CD8-positive, alpha-beta T cell (primary cell): ENCODE measurements at regions of chr7 and their contacts with region 1.

Region 1: GRCh38 chr7:8125680-8126444 is 136.1 kb downstream of the ICA1 start:
- DNase-seq: peak; percentile 67 to 96 (median 81)
- ATAC-seq: peak; percentile 91
- H3K4me3 ChIP-seq: peak overlapping the region in 1 of 2 experiments; percentile 3
- H3K4me3 Mint-ChIP-seq: peak overlapping the region; percentile 33
- H3K27ac ChIP-seq: peak overlapping the region; percentile 60 to 65
- H3K27ac Mint-ChIP-seq: peak overlapping the region; percentile 97
- H3K4me1 ChIP-seq: peaks cover 61% of the 10 kb centered on the region
- H3K4me1 Mint-ChIP-seq: peaks cover 85% of the 10 kb centered on the region
- H3K27me3 ChIP-seq: no peaks in the 10 kb centered on the region
- H3K27me3 Mint-ChIP-seq: no peaks in the 10 kb centered on the region
- CTCF ChIP-seq: no peak

Region 2: GRCh38 chr7:8084836-8085235 is 41.0 kb before region 1 on chr7:
- CTCF ChIA-PET with region 1: no interaction called
- POLR2A ChIA-PET with region 1: no interaction called
- intact Hi-C with region 1: loop called (anchors 2 to 5 kb)
- DNase-seq: no peak
- ATAC-seq: no peak
- H3K4me3 ChIP-seq: no peak overlapping the region
- H3K4me3 Mint-ChIP-seq: no peak overlapping the region
- H3K27ac ChIP-seq: no peak overlapping the region
- H3K27ac Mint-ChIP-seq: no peak overlapping the region
- H3K4me1 ChIP-seq: no peaks in the 10 kb centered on the region
- H3K4me1 Mint-ChIP-seq: peaks cover 3% of the 10 kb centered on the region
- H3K27me3 ChIP-seq: no peaks in the 10 kb centered on the region
- H3K27me3 Mint-ChIP-seq: no peaks in the 10 kb centered on the region
- CTCF ChIP-seq: no peak

Region 3: GRCh38 chr7:8092140-8092539 is 33.7 kb before region 1 on chr7:
- CTCF ChIA-PET with region 1: no interaction called
- POLR2A ChIA-PET with region 1: no interaction called
- intact Hi-C with region 1: loop called (anchors 2 to 5 kb)
- DNase-seq: no peak
- ATAC-seq: no peak
- H3K4me3 ChIP-seq: no peak overlapping the region
- H3K4me3 Mint-ChIP-seq: no peak overlapping the region
- H3K27ac ChIP-seq: no peak overlapping the region
- H3K27ac Mint-ChIP-seq: no peak overlapping the region
- H3K4me1 ChIP-seq: no peaks in the 10 kb centered on the region
- H3K4me1 Mint-ChIP-seq: peaks cover 3% of the 10 kb centered on the region
- H3K27me3 ChIP-seq: no peaks in the 10 kb centered on the region
- H3K27me3 Mint-ChIP-seq: no peaks in the 10 kb centered on the region
- CTCF ChIP-seq: no peak

Region 4: DNA sequence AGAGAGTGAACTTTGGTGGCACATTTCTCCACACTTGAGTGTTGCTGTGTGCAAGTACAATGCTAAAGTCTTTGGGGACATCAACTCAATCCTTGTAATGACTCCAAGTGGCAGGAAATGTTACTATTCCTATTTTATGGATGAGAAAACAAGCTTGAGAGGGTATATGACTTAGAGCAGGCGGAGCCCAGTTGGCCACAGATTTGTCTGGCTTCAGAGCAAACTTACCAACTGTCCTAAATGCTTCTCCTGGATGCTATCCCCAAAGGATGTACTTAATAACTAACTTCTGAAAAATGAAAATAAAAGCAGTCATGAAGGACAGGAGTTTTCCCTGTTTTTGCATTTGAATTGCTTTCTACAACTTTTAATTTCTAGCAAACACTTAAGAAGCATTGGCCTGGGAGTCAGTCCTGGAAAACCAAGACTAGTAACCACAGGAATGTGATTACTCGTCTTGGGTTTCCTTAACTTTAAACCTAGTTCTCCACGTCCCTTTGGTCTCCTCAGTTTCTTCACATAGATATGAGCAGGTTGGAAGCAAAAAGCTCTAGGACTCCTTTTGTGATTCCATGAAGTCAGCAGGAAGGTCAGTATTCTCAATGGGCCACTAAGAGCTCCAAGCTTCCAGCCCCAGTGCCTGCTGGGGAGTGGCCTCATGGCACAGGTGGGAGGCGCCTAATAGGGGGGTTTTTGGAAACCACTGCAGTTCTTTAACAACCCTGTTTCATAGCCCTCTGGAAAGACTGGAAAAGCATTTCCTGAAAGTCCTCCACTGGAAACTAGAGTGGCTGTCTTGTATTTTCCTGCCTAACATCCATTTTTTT is 16.5 kb before region 1 on chr7:
- CTCF ChIA-PET with region 1: interaction called, 3 read pairs
- POLR2A ChIA-PET with region 1: interaction called, 11 read pairs
- intact Hi-C with region 1: no loop called
- DNase-seq: no peak
- ATAC-seq: no peak
- H3K4me3 ChIP-seq: no peak overlapping the region
- H3K4me3 Mint-ChIP-seq: no peak overlapping the region
- H3K27ac ChIP-seq: no peak overlapping the region
- H3K27ac Mint-ChIP-seq: no peak overlapping the region
- H3K4me1 ChIP-seq: peaks cover 32% of the 10 kb centered on the region
- H3K4me1 Mint-ChIP-seq: peaks cover 33% of the 10 kb centered on the region
- H3K27me3 ChIP-seq: no peaks in the 10 kb centered on the region
- H3K27me3 Mint-ChIP-seq: no peaks in the 10 kb centered on the region
- CTCF ChIP-seq: no peak

Region 5: GRCh38 chr7:8176370-8177081 is 50.7 kb after region 1 on chr7:
- CTCF ChIA-PET with region 1: interaction called, 3 read pairs
- POLR2A ChIA-PET with region 1: interaction called, 9 read pairs
- intact Hi-C with region 1: loop called in 1 of 2 experiments (anchors 2 kb)
- DNase-seq: peak; percentile 31 to 90 (median 71)
- ATAC-seq: peak; percentile 91
- H3K4me3 ChIP-seq: peak overlapping the region; percentile 6 to 36
- H3K4me3 Mint-ChIP-seq: peak overlapping the region; percentile 74
- H3K27ac ChIP-seq: peak overlapping the region; percentile 63 to 84
- H3K27ac Mint-ChIP-seq: peak overlapping the region; percentile 98
- H3K4me1 ChIP-seq: peaks cover 50% of the 10 kb centered on the region
- H3K4me1 Mint-ChIP-seq: peaks cover 65% of the 10 kb centered on the region
- H3K27me3 ChIP-seq: no peaks in the 10 kb centered on the region
- H3K27me3 Mint-ChIP-seq: no peaks in the 10 kb centered on the region
- CTCF ChIP-seq: no peak

Region 6: GRCh38 chr7:8190119-8190895 is 64.4 kb after region 1 on chr7:
- CTCF ChIA-PET with region 1: interaction called, 38 read pairs
- POLR2A ChIA-PET with region 1: interaction called, 3 read pairs
- intact Hi-C with region 1: no loop called
- DNase-seq: peak; percentile 32 to 84 (median 70)
- ATAC-seq: peak; percentile 86
- H3K4me3 ChIP-seq: no peak overlapping the region
- H3K4me3 Mint-ChIP-seq: no peak overlapping the region
- H3K27ac ChIP-seq: no peak overlapping the region
- H3K27ac Mint-ChIP-seq: no peak overlapping the region
- H3K4me1 ChIP-seq: no peaks in the 10 kb centered on the region
- H3K4me1 Mint-ChIP-seq: peaks cover 16% of the 10 kb centered on the region
- H3K27me3 ChIP-seq: no peaks in the 10 kb centered on the region
- H3K27me3 Mint-ChIP-seq: peaks cover 5% of the 10 kb centered on the region
- CTCF ChIP-seq: peak; percentile 89

Region 7: GRCh38 chr7:8205537-8205936 is 79.7 kb after region 1 on chr7:
- CTCF ChIA-PET with region 1: no interaction called
- POLR2A ChIA-PET with region 1: no interaction called
- intact Hi-C with region 1: no loop called
- DNase-seq: no peak
- ATAC-seq: no peak
- H3K4me3 ChIP-seq: no peak overlapping the region
- H3K4me3 Mint-ChIP-seq: no peak overlapping the region
- H3K27ac ChIP-seq: no peak overlapping the region
- H3K27ac Mint-ChIP-seq: no peak overlapping the region
- H3K4me1 ChIP-seq: no peaks in the 10 kb centered on the region
- H3K4me1 Mint-ChIP-seq: peaks cover 1% of the 10 kb centered on the region
- H3K27me3 ChIP-seq: no peaks in the 10 kb centered on the region
- H3K27me3 Mint-ChIP-seq: no peaks in the 10 kb centered on the region
- CTCF ChIP-seq: no peak